GM12878 (cell line): ENCODE measurements at regions of chr20 and their contacts with region 1.

Region 1: DNA sequence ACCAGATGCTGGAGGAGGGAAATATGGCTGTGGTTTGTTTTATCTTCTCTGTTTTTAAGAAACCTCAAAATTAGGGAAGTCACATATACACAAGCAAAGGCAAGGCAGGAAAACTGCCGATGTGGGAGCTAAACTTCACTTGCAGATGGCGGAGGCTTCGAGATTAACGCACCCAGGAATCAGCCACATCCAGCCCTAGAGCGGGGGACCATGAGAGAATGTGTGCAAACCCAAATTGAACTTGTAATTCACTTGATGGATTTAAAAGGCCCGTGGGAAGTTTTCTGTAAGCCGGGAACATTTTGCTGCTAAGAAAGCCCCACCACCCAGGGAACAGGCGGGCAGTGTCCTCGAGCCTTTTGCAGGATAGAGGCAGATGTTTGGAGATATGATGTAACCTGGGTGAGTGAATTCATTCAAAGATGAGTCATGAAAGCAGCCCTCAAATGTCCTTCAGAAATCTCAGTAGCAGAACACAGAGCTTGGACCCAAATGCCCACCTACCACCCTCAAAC is 39.9 kb downstream of the PREX1 start:
- DNase-seq: no peak
- ATAC-seq: peak; percentile 36
- H3K4me3 ChIP-seq: peak overlapping the region; percentile 46
- H3K27ac ChIP-seq: peak overlapping the region; percentile 95
- H3K4me1 ChIP-seq: peaks cover 85% of the 10 kb centered on the region
- H3K27me3 ChIP-seq: no peaks in the 10 kb centered on the region
- CTCF ChIP-seq: no peak
- EP300 ChIP-seq: no peak
- POLR2A ChIP-seq: no peak
- RAD21 ChIP-seq: no peak

Region 2: GRCh38 chr20:48538420-48539203 is 249.3 kb before region 1 on chr20:
- CTCF ChIA-PET with region 1: no interaction called
- POLR2A ChIA-PET with region 1: no interaction called
- RAD21 ChIA-PET with region 1: no interaction called
- SMC1A ChIA-PET with region 1: no interaction called
- in situ Hi-C with region 1: no loop called
- intact Hi-C with region 1: no loop called
- DNase-seq: no peak
- ATAC-seq: no peak
- H3K4me3 ChIP-seq: no peak overlapping the region
- H3K27ac ChIP-seq: no peak overlapping the region
- H3K4me1 ChIP-seq: peaks cover 11% of the 10 kb centered on the region
- H3K27me3 ChIP-seq: 0 out of 4 replicates have a peak, but pooled peaks cover 0 to under 1% of the 10 kb centered on the region in 2 experiments
- CTCF ChIP-seq: no peak
- EP300 ChIP-seq: no peak
- POLR2A ChIP-seq: no peak
- RAD21 ChIP-seq: no peak

Region 3: DNA sequence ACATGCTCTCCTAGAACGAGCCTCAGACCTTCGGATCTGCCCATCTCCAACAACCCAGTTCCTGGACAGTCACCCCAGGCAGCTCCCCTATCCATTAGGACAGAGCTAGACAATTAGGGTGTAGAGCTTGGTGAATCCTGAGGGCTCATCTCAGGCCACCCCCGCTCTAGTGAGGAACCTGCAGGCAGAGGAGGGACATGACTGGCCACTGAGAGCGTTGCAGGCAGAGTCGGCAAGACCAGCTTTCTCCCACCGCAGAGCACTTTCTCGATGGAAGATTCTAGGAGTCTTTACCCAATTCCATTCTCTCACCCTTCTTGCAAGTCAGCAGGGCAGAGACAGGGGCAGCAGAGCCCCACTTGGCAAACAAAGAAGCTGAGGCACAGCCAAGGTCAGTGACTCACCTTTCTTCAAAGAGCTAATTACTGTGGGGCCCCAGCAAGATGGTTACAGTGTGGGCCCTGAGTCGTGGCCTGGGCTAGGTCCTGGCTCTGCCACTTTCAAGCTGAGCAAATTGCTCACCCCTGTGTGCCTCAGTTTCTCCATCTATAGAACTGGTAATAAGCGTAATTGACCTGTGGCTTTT is 237.2 kb before region 1 on chr20:
- CTCF ChIA-PET with region 1: no interaction called
- POLR2A ChIA-PET with region 1: no interaction called
- RAD21 ChIA-PET with region 1: no interaction called
- SMC1A ChIA-PET with region 1: no interaction called
- in situ Hi-C with region 1: no loop called
- intact Hi-C with region 1: no loop called
- DNase-seq: no peak
- ATAC-seq: no peak
- H3K4me3 ChIP-seq: no peak overlapping the region
- H3K27ac ChIP-seq: no peak overlapping the region
- H3K4me1 ChIP-seq: no peaks in the 10 kb centered on the region
- H3K27me3 ChIP-seq: peaks cover 1 to 3% of the 10 kb centered on the region in 2 experiments; a peak in 3 of 4 replicates
- CTCF ChIP-seq: no peak
- EP300 ChIP-seq: no peak
- POLR2A ChIP-seq: no peak
- RAD21 ChIP-seq: no peak

Region 4: DNA sequence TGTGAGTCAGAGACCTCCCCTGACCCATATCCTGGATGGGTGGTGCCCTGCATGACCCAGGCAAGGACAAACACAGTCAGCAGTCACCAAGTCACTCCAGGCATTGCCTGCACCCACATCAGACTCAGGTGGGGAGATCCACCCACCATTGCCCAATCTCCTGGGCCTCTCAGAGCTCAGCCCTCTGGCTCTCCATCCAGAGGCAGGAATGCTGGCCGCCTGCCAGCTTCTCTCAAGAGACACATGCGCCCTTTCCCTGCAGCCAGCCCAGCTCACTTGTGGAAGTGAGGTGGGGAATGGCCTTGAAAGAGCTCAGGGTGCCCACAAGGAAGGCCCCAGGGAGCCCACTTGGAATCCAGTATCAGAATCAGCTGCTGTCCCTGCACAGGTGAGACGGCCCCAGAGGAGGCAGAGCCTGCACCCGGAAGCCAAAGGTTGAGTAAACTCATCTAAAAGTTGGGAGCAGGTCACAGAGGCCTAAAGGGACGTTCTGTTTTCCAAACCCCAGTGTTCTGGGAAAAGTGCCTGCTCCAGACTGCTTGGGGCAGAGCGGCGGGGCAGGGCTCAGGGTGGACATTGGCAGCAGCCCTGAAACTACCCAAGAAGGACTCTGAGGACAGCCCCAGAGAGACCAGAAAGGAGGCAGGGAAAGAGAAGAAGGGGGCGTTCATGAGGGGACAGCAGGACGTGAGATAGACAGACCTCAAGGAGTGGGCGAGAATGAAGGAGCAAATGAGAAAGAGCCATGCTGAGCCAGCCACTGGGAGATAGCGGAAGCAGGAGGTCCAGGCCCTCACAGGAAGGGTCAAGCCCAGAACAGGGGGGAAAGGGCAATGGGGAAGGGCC is 89.8 kb before region 1 on chr20:
- CTCF ChIA-PET with region 1: no interaction called
- POLR2A ChIA-PET with region 1: no interaction called
- RAD21 ChIA-PET with region 1: no interaction called
- SMC1A ChIA-PET with region 1: no interaction called
- in situ Hi-C with region 1: no loop called
- intact Hi-C with region 1: no loop called
- DNase-seq: no peak
- ATAC-seq: no peak
- H3K4me3 ChIP-seq: no peak overlapping the region
- H3K27ac ChIP-seq: no peak overlapping the region
- H3K4me1 ChIP-seq: no peaks in the 10 kb centered on the region
- H3K27me3 ChIP-seq: no peaks in the 10 kb centered on the region
- CTCF ChIP-seq: no peak
- EP300 ChIP-seq: no peak
- POLR2A ChIP-seq: 0 out of 2 replicates have a peak, but pooled peaks have one; percentile 9
- RAD21 ChIP-seq: no peak

Region 5: GRCh38 chr20:48722737-48723191 is 65.2 kb before region 1 on chr20:
- CTCF ChIA-PET with region 1: no interaction called
- POLR2A ChIA-PET with region 1: interaction called, 4 read pairs
- RAD21 ChIA-PET with region 1: interaction called, 4 read pairs
- SMC1A ChIA-PET with region 1: interaction called, 8 read pairs
- in situ Hi-C with region 1: no loop called
- intact Hi-C with region 1: loop called (anchors 2 kb)
- DNase-seq: no peak
- ATAC-seq: peak; percentile 14
- H3K4me3 ChIP-seq: no peak overlapping the region
- H3K27ac ChIP-seq: peak overlapping the region; percentile 89
- H3K4me1 ChIP-seq: peaks cover 63% of the 10 kb centered on the region
- H3K27me3 ChIP-seq: no peaks in the 10 kb centered on the region
- CTCF ChIP-seq: 0 out of 6 replicates have a peak, but pooled peaks of 1 of the 3 experiments have one; percentile 3
- EP300 ChIP-seq: no peak
- POLR2A ChIP-seq: no peak
- RAD21 ChIP-seq: no peak

Region 6: DNA sequence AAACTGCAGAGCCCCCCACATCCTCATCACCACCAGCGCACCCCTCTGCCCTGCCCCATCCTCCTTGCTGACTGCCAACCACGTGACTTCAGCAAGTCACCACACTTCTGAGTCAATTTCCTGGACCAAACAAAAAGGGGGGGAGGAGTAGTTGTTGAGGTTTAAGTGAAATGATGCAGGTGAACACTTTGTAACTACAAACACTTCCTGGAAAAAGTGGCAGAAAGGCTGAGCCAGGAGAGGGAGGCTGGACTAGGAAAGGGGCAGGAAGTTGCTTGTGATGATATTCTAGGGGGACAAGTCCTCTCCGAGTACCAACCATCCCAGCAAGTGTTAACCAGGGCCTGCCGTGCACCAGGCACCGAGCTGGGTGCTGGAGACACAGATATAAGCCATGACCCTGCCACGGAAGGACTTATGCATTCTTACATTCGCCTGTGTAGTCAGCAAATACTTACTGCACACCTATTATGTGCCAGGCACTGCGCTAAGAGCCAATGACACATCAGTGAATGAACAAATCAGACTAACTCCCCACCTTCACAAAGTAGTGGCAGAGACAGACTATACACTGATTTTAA is 27.4 kb before region 1 on chr20:
- CTCF ChIA-PET with region 1: interaction called, 3 read pairs
- POLR2A ChIA-PET with region 1: interaction called, 6 read pairs
- RAD21 ChIA-PET with region 1: interaction called, 5 read pairs
- SMC1A ChIA-PET with region 1: interaction called, 8 read pairs
- in situ Hi-C with region 1: no loop called
- intact Hi-C with region 1: loop called (anchors 2 kb)
- DNase-seq: no peak
- ATAC-seq: peak; percentile 83
- H3K4me3 ChIP-seq: peak overlapping the region; percentile 43; the same call in 1 of the 2 replicates
- H3K27ac ChIP-seq: peak overlapping the region; percentile 77
- H3K4me1 ChIP-seq: peaks cover 53% of the 10 kb centered on the region
- H3K27me3 ChIP-seq: no peaks in the 10 kb centered on the region
- CTCF ChIP-seq: no peak
- EP300 ChIP-seq: no peak; a peak in 1 of 4 replicates
- POLR2A ChIP-seq: peak; percentile 57; the same call in 1 of the 2 replicates
- RAD21 ChIP-seq: 0 out of 2 replicates have a peak, but pooled peaks have one; percentile 2

Region 7: DNA sequence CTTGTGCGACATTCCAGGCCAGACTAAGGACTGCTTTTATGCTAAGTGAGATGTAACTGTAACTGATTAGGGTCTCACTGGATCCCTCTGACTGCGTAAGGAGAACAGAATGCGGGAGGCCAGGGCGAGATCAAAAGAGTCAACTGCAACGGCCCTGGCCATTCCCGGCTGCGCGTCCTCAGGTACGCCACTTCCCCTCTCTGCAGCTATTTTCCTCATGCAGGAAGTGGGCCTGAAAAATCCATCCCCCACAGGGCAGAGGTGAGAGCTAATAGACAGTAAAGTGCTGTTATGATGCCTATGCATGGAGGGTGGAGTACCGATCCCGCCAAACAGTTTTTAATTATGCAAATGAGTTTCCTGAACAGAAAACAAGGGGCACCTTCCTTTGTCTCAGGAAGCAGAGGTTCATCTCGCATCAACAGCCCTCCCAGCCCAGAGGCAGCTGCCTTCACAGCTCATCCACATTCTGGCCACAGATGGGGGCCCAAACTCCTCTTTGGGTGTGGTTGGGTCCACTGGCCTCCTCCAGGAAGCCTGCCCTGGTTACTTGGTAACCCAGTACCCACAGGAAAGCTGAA is 30.6 kb after region 1 on chr20:
- CTCF ChIA-PET with region 1: interaction called, 5 read pairs
- POLR2A ChIA-PET with region 1: interaction called, 5 read pairs
- RAD21 ChIA-PET with region 1: interaction called, 17 read pairs
- SMC1A ChIA-PET with region 1: interaction called, 11 read pairs
- in situ Hi-C with region 1: no loop called
- intact Hi-C with region 1: no loop called
- DNase-seq: peak; percentile 59
- ATAC-seq: peak; percentile 60
- H3K4me3 ChIP-seq: peak overlapping the region; percentile 46; the same call in 1 of the 2 replicates
- H3K27ac ChIP-seq: peak overlapping the region; percentile 83
- H3K4me1 ChIP-seq: peaks cover 67% of the 10 kb centered on the region
- H3K27me3 ChIP-seq: no peaks in the 10 kb centered on the region
- CTCF ChIP-seq: no peak
- EP300 ChIP-seq: peak in 1 of 2 experiments; percentile 30; a peak in 1 of 4 replicates
- POLR2A ChIP-seq: peak; percentile 38; the same call in 1 of the 2 replicates
- RAD21 ChIP-seq: no peak

Region 8: GRCh38 chr20:48846498-48847485 is 58.9 kb after region 1 on chr20:
- CTCF ChIA-PET with region 1: interaction called, 4 read pairs
- POLR2A ChIA-PET with region 1: interaction called, 3 read pairs
- RAD21 ChIA-PET with region 1: interaction called, 8 read pairs
- SMC1A ChIA-PET with region 1: interaction called, 4 read pairs
- in situ Hi-C with region 1: no loop called
- intact Hi-C with region 1: loop called (anchors 2 kb)
- DNase-seq: peak; percentile 93
- ATAC-seq: peak; percentile 97
- H3K4me3 ChIP-seq: no peak overlapping the region; the same call in 1 of the 2 replicates
- H3K27ac ChIP-seq: peak overlapping the region; percentile 91
- H3K4me1 ChIP-seq: peaks cover 36% of the 10 kb centered on the region
- H3K27me3 ChIP-seq: no peaks in the 10 kb centered on the region
- CTCF ChIP-seq: no peak
- EP300 ChIP-seq: peak; percentile 92 to 97
- POLR2A ChIP-seq: peak; percentile 49; the same call in 1 of the 2 replicates
- RAD21 ChIP-seq: no peak

Region 9: DNA sequence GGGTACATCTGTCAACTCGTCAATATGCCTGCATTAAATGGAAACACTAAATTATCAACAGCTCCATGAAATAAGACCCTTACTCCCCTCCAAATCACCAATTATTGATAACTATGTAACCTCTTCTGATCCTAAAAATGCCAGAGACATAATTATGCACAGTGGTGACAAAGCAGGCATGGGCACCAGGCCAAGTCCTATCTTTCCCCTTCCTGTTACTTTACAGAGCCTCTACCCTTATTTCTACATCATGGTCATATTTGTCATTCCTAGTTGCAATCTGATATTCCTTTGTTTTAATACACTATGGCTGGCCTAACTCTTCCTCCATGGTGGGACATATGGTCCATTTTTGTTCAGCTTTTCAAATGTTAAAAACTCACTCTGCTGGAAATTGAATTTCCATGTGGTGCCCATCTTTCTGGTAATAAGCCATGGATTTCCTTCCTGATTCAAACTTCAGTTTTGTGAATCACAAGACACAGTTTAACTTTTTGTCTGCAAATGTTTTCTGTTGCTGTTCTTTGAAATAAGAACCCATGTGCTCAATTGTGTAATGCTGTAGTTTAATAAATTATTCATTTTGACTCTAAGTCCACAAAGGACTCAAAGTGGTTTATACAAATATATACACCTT is 91.8 kb after region 1 on chr20:
- CTCF ChIA-PET with region 1: no interaction called
- POLR2A ChIA-PET with region 1: no interaction called
- RAD21 ChIA-PET with region 1: no interaction called
- SMC1A ChIA-PET with region 1: no interaction called
- in situ Hi-C with region 1: no loop called
- intact Hi-C with region 1: no loop called
- DNase-seq: no peak
- ATAC-seq: no peak
- H3K4me3 ChIP-seq: no peak overlapping the region
- H3K27ac ChIP-seq: no peak overlapping the region
- H3K4me1 ChIP-seq: no peaks in the 10 kb centered on the region
- H3K27me3 ChIP-seq: no peaks in the 10 kb centered on the region
- CTCF ChIP-seq: no peak
- EP300 ChIP-seq: no peak
- POLR2A ChIP-seq: no peak
- RAD21 ChIP-seq: no peak